CD8-positive, alpha-beta T cell (primary cell): ENCODE measurements at regions of chr1 and their contacts with region 1.

Region 1: DNA sequence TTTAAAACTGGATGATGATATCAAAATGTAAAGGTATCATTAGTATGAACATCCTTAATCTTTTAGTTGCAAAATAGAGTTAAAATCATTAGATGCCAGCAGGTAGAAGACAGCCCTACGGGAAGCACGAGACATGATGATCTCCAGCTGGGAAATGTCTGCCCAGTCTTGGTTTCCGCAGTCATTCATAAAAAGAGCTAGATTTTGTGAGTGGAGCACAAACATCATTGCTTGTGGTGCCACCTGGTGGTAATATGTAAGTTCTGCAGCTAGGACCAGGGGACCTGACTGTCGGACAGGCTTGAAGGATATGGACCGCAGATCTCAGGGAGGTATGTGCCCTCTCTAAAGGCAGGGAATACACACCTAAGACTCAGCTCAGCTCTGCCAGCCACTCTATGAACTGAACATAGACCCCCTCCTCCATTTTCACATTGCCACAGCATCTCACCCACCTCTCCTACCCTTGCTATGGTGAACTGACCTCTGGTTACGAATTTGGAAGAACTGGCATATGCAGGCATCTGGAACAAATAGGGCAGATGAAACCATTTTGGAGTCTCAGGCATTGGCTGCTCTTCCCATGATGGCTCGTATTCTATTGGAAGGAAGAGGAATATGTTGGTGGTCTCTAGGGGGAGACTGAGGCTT is 9.2 kb downstream of the FCMR start:
- DNase-seq: peak in 7 of 9 experiments; percentile 37 to 85 (median 67)
- ATAC-seq: peak; percentile 48
- H3K4me3 ChIP-seq: no peak overlapping the region
- H3K4me3 Mint-ChIP-seq: peak overlapping the region; percentile 69
- H3K27ac ChIP-seq: peak overlapping the region in 1 of 2 experiments; percentile 95
- H3K27ac Mint-ChIP-seq: peak overlapping the region; percentile 97
- H3K4me1 ChIP-seq: peaks cover 94% of the 10 kb centered on the region
- H3K4me1 Mint-ChIP-seq: peaks cover 91% of the 10 kb centered on the region
- H3K27me3 ChIP-seq: no peaks in the 10 kb centered on the region
- H3K27me3 Mint-ChIP-seq: no peaks in the 10 kb centered on the region
- CTCF ChIP-seq: peak; percentile 88

Region 2: GRCh38 chr1:206679738-206680211 is 232.8 kb before region 1 on chr1:
- CTCF ChIA-PET with region 1: no interaction called
- POLR2A ChIA-PET with region 1: no interaction called
- intact Hi-C with region 1: no loop called
- DNase-seq: peak in 1 of 9 experiments; percentile 35
- ATAC-seq: no peak
- H3K4me3 ChIP-seq: no peak overlapping the region
- H3K4me3 Mint-ChIP-seq: no peak overlapping the region
- H3K27ac ChIP-seq: no peak overlapping the region
- H3K27ac Mint-ChIP-seq: no peak overlapping the region
- H3K4me1 ChIP-seq: peaks cover 3% of the 10 kb centered on the region
- H3K4me1 Mint-ChIP-seq: peaks cover 7% of the 10 kb centered on the region
- H3K27me3 ChIP-seq: no peaks in the 10 kb centered on the region
- H3K27me3 Mint-ChIP-seq: no peaks in the 10 kb centered on the region
- CTCF ChIP-seq: no peak

Region 3: GRCh38 chr1:206725109-206725963 is 187.2 kb before region 1 on chr1:
- CTCF ChIA-PET with region 1: interaction called, 42 read pairs
- POLR2A ChIA-PET with region 1: no interaction called
- intact Hi-C with region 1: loop called (anchors 1 kb)
- DNase-seq: peak in 8 of 9 experiments; percentile 34 to 78 (median 64)
- ATAC-seq: peak; percentile 57
- H3K4me3 ChIP-seq: no peak overlapping the region
- H3K4me3 Mint-ChIP-seq: peak overlapping the region; percentile 5
- H3K27ac ChIP-seq: no peak overlapping the region
- H3K27ac Mint-ChIP-seq: peak overlapping the region; percentile 25
- H3K4me1 ChIP-seq: peaks cover 27% of the 10 kb centered on the region
- H3K4me1 Mint-ChIP-seq: peaks cover 59% of the 10 kb centered on the region
- H3K27me3 ChIP-seq: no peaks in the 10 kb centered on the region
- H3K27me3 Mint-ChIP-seq: no peaks in the 10 kb centered on the region
- CTCF ChIP-seq: peak; percentile 47

Region 4: DNA sequence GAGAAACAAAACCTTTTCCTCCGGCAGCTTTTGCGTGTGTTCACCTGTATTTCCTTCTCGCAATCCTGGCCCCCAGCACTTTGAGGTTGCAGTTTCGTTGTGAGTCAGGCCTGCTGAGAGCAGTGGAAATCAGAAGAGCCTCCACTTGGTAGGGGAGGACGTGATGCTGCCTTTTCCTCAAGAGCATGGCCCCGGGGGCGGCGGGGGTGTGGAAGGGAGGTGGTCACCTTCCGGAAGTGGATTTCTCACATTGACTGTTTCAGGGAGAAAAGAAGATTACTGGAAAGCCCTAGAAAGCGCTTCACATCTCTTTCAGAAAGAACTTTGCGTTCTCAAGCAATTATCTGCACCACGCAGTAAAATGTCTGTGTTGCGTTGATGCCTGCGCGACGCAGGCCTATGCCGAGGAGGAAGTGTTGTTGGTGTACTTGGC is 128.1 kb before region 1 on chr1:
- CTCF ChIA-PET with region 1: no interaction called
- POLR2A ChIA-PET with region 1: no interaction called
- intact Hi-C with region 1: no loop called
- DNase-seq: peak in 8 of 9 experiments; percentile 43 to 78 (median 62)
- ATAC-seq: peak; percentile 88
- H3K4me3 ChIP-seq: no peak overlapping the region
- H3K4me3 Mint-ChIP-seq: peak overlapping the region; percentile 63
- H3K27ac ChIP-seq: no peak overlapping the region
- H3K27ac Mint-ChIP-seq: peak overlapping the region; percentile 86
- H3K4me1 ChIP-seq: peaks cover 56% of the 10 kb centered on the region
- H3K4me1 Mint-ChIP-seq: peaks cover 62% of the 10 kb centered on the region
- H3K27me3 ChIP-seq: no peaks in the 10 kb centered on the region
- H3K27me3 Mint-ChIP-seq: no peaks in the 10 kb centered on the region
- CTCF ChIP-seq: no peak

Region 5: DNA sequence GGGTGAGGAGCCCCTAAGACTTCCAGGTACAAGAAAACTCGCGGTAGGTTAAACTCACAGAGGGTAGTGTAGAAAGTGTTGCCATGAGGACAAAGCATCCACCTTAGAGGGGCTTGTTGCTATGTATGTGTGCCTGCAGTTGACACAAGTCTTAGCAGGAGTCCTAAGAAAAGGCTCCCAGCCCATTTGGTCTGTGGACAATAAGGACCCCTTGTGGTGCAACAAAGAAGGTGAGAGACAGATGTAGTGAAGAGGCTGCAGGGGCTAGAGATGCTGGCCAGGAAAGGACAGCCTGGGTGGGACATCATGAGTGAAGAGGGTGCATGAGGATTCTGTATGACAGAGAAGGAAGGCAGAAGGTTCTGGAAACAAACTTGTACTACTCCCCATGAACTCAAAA is 104.0 kb before region 1 on chr1:
- CTCF ChIA-PET with region 1: interaction called, 106 read pairs
- POLR2A ChIA-PET with region 1: interaction called, 11 read pairs
- intact Hi-C with region 1: loop called (anchors 1 kb)
- DNase-seq: peak; percentile 16 to 87 (median 54)
- ATAC-seq: peak; percentile 91
- H3K4me3 ChIP-seq: no peak overlapping the region
- H3K4me3 Mint-ChIP-seq: no peak overlapping the region
- H3K27ac ChIP-seq: no peak overlapping the region
- H3K27ac Mint-ChIP-seq: peak overlapping the region; percentile 10
- H3K4me1 ChIP-seq: peaks cover 25% of the 10 kb centered on the region
- H3K4me1 Mint-ChIP-seq: peaks cover 42% of the 10 kb centered on the region
- H3K27me3 ChIP-seq: no peaks in the 10 kb centered on the region
- H3K27me3 Mint-ChIP-seq: no peaks in the 10 kb centered on the region
- CTCF ChIP-seq: peak; percentile 50

Region 6: DNA sequence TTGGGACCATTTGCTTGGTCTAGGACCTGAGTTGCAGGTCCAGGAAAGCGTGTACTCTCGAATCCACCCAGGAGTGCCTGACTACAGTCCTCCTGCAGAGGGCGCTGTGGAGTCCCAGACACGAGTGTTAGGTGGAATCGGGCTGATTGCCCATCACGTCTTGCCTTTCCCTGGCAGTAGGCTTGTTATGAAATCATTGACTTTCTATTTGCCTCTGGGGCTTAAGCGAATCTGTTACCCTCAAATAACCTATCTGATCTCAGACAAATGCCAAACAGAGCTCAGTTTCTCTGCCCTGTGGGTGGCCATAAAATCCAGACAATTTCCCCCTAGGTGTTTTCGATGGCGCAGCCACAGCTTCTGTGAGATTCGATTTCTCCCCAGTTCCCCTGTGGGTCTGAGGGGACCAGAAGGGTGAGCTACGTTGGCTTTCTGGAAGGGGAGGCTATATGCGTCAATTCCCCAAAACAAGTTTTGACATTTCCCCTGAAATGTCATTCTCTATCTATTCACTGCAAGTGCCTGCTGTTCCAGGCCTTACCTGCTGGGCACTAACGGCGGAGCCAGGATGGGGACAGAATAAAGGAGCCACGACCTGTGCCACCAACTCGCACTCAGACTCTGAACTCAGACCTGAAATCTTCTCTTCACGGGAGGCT is 47.4 kb before region 1 on chr1 and contains the start of gene IL20:
- CTCF ChIA-PET with region 1: interaction called, 46 read pairs
- POLR2A ChIA-PET with region 1: interaction called, 4 read pairs
- intact Hi-C with region 1: loop called (anchors 1 kb)
- DNase-seq: peak; percentile 72 to 93 (median 86)
- ATAC-seq: peak; percentile 97
- H3K4me3 ChIP-seq: no peak within 1 kb of the TSS
- H3K4me3 Mint-ChIP-seq: no peak within 1 kb of the TSS
- H3K27ac ChIP-seq: no peak within 1 kb of the TSS
- H3K27ac Mint-ChIP-seq: no peak within 1 kb of the TSS
- H3K4me1 ChIP-seq: peaks cover 7% of the 10 kb centered on the region
- H3K4me1 Mint-ChIP-seq: peaks cover 7% of the 10 kb centered on the region
- H3K27me3 ChIP-seq: no peaks in the 10 kb centered on the region
- H3K27me3 Mint-ChIP-seq: no peaks in the 10 kb centered on the region
- CTCF ChIP-seq: peak; percentile 91
- total RNA-seq, gene IL20: not detected

Region 7: GRCh38 chr1:206925106-206925736 is 12.7 kb after region 1 on chr1:
- CTCF ChIA-PET with region 1: interaction called, 395 read pairs
- POLR2A ChIA-PET with region 1: interaction called, 312 read pairs
- intact Hi-C with region 1: loop called in 1 of 2 experiments (anchors 1 kb)
- DNase-seq: peak; percentile 49 to 90 (median 70)
- ATAC-seq: peak; percentile 40
- H3K4me3 ChIP-seq: no peak overlapping the region
- H3K4me3 Mint-ChIP-seq: no peak overlapping the region
- H3K27ac ChIP-seq: peak overlapping the region; percentile 46 to 95
- H3K27ac Mint-ChIP-seq: no peak overlapping the region
- H3K4me1 ChIP-seq: peaks cover 62% of the 10 kb centered on the region
- H3K4me1 Mint-ChIP-seq: peaks cover 51% of the 10 kb centered on the region
- H3K27me3 ChIP-seq: no peaks in the 10 kb centered on the region
- H3K27me3 Mint-ChIP-seq: no peaks in the 10 kb centered on the region
- CTCF ChIP-seq: no peak

Region 8: DNA sequence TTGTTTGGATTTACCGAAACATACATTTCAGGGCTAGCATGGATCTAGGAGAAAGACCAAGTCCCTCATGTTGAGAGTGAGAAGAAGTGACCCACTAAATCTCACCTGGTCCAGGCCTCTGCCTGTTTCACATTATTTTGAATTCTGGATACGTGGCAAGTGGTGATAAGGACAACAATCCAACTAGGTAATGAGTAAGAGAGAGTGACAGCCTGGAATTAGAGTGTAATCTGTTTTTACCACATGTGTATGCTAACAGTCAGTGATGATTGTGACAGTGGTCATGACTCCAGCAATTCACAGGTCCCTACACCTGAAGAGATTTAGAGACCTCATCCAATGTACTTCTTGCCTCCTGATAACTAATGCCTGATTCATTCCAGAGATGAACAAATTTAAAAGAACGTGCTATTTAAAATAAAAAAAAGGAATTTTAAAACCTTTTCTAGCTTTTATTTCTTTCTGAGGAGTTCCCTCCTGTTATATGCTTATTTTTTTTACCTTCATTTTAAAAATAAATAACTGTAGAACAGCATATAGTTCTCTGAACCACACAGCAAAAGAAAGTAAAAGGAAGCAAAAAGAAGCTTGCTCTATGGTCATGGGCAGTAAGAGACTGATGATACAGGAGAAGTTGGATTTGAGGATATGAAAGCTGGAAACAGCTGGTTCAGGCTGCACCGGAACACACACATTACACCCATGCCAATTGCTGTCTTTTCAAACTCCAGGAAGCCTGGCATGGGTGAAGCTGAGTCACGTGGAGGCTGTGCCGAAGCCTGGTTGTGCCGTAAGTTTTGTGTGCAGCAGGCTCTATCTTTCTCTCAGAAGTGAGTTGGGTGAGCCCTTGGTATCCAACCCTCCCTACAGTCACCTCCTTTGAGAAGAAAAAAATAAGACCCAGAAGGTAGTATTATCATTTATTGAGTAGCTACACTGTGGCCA is 105.3 kb after region 1 on chr1:
- CTCF ChIA-PET with region 1: no interaction called
- POLR2A ChIA-PET with region 1: no interaction called
- intact Hi-C with region 1: no loop called
- DNase-seq: no peak
- ATAC-seq: no peak
- H3K4me3 ChIP-seq: no peak overlapping the region
- H3K4me3 Mint-ChIP-seq: no peak overlapping the region
- H3K27ac ChIP-seq: no peak overlapping the region
- H3K27ac Mint-ChIP-seq: no peak overlapping the region
- H3K4me1 ChIP-seq: no peaks in the 10 kb centered on the region
- H3K4me1 Mint-ChIP-seq: no peaks in the 10 kb centered on the region
- H3K27me3 ChIP-seq: no peaks in the 10 kb centered on the region
- H3K27me3 Mint-ChIP-seq: peaks cover 17% of the 10 kb centered on the region
- CTCF ChIP-seq: no peak

Region 9: DNA sequence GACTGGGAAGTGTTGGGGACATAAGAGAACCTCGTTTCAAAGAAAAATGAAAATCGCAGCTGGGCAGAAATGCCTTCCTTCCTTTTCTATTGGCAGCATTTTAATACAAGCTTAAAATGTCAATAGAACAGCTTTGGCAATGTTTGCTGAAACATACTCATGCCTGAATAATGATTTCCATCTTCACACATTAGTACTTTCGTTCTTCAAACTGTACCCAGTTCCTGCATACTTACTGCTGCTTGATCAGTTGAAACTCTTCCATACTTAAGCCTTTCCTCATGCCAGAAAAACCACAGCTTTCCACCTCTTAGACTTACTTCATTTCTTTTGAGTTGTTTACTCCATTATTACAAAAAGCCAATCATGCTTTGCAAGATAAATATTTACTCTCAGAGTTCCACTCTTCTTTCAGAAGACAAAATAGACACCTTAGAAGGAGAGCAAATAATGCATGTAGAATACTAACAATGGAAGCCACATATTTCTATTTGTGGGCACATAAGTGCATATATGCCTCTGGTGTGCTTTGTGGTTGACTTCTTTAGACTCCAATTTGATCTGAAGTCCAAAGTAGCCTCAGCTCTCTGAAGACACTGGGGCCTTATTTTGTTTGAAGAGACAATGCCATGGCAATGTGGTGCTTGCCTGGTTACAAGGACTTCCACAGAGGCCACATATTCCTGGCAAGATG is 386.2 kb after region 1 on chr1:
- CTCF ChIA-PET with region 1: no interaction called
- POLR2A ChIA-PET with region 1: no interaction called
- intact Hi-C with region 1: no loop called
- DNase-seq: no peak
- ATAC-seq: no peak
- H3K4me3 ChIP-seq: no peak overlapping the region
- H3K4me3 Mint-ChIP-seq: no peak overlapping the region
- H3K27ac ChIP-seq: no peak overlapping the region
- H3K27ac Mint-ChIP-seq: no peak overlapping the region
- H3K4me1 ChIP-seq: no peaks in the 10 kb centered on the region
- H3K4me1 Mint-ChIP-seq: peaks cover 19% of the 10 kb centered on the region
- H3K27me3 ChIP-seq: no peaks in the 10 kb centered on the region
- H3K27me3 Mint-ChIP-seq: no peaks in the 10 kb centered on the region
- CTCF ChIP-seq: no peak